Vagina (tissue), 2 donors: ENCODE measurements at regions of chr18 and their contacts with region 1.

Region 1: DNA sequence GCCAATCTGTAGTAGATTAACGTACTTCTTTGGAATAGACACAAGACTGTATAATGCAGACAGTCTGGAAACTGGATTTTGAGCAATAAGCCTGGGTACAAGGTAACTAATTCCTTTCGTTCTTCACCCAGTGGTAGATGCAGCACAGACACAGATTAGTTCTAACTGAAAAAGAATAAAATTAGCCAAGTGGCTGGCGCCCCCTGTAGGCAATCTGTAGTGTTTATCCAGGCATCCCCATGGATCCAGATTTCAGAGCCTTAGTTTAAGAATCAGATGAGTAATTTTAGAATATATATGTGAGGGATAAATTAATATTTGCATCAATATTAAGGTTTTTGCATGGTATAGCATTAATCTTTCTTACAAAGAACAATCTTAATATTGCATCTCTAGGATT is 563.9 kb downstream of the DCC start:
- DNase-seq: no peak
- H3K4me3 ChIP-seq: no peak overlapping the region
- H3K27ac ChIP-seq: no peak overlapping the region
- H3K4me1 ChIP-seq: no peaks in the 10 kb centered on the region
- H3K27me3 ChIP-seq: no peaks in the 10 kb centered on the region
- CTCF ChIP-seq: no peak
- POLR2A ChIP-seq: no peak

Region 2: GRCh38 chr18:51953521-51953920 is 950.3 kb before region 1 on chr18:
- intact Hi-C with region 1: loop called (anchors 10 kb)
- DNase-seq: no peak
- H3K4me3 ChIP-seq: no peak overlapping the region
- H3K27ac ChIP-seq: no peak overlapping the region
- H3K4me1 ChIP-seq: no peaks in the 10 kb centered on the region
- H3K27me3 ChIP-seq: no peaks in the 10 kb centered on the region
- CTCF ChIP-seq: no peak
- POLR2A ChIP-seq: no peak